Mammary epithelial cell (primary cell): ENCODE measurements at regions of chr15 and their contacts with region 1.

Region 1: DNA sequence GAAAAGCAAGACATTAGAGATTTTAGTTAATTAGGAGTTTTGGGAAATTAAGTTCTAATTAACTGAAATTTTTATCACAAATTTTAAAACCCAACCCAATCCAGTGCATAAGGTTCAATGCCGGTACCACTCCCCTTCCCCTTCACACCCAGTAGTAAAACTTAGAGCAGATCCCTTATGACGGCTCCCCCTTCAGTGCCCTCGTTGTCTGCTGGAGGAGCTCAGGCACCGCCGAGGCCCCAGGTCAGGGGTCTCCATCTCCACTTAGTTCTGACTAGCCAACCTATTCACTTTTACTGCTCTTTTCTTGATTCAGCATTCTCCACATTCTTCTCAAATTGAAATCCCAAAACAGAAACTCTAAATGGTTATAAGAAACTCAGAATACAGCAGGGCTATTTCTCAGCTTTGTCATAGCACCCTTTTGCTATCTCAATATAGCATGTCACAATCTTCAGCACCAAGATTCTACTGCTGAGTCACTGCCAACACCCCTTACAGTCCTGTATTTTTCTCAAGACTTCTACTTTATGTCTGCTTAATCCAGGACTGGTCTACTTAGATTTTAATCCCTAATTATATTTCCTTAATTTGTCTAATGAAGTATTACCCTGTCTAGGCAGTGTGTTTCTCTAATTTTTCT is 39.8 kb downstream of the TUBGCP4 start:
- DNase-seq: peak; percentile 24
- H3K4me3 ChIP-seq: no peak overlapping the region
- H3K27ac ChIP-seq: no peak overlapping the region
- H3K4me1 ChIP-seq: no peaks in the 10 kb centered on the region
- H3K27me3 ChIP-seq: no peaks in the 10 kb centered on the region
- CTCF ChIP-seq: no peak

Region 2: GRCh38 chr15:43329960-43330779 is 80.5 kb before region 1 on chr15 and contains the start of gene LCMT2:
- CTCF ChIA-PET with region 1: no interaction called
- dilution Hi-C with region 1: loop called (anchors 5 kb)
- in situ Hi-C with region 1: no loop called
- intact Hi-C with region 1: no loop called
- DNase-seq: peak; percentile 93
- H3K4me3 ChIP-seq: peak within 1 kb of the TSS; percentile 76 to 85 (median 81)
- H3K27ac ChIP-seq: peak within 1 kb of the TSS; percentile 72
- H3K4me1 ChIP-seq: peaks cover 14% of the 10 kb centered on the region
- H3K27me3 ChIP-seq: no peaks in the 10 kb centered on the region
- CTCF ChIP-seq: no peak
- total RNA-seq, gene LCMT2: 7.9 to 9.5 TPM

Region 3: GRCh38 chr15:43370975-43371974 is 39.4 kb before region 1 on chr15 and contains the starts of genes TUBGCP4 and ZSCAN29:
- CTCF ChIA-PET with region 1: no interaction called
- dilution Hi-C with region 1: loop called (anchors 5 kb)
- in situ Hi-C with region 1: no loop called
- intact Hi-C with region 1: no loop called
- DNase-seq: peak; percentile 64
- H3K4me3 ChIP-seq: peak within 1 kb of the TSS; percentile 74 to 99 (median 89)
- H3K27ac ChIP-seq: peak within 1 kb of the TSS; percentile 28
- H3K4me1 ChIP-seq: peaks cover 10% of the 10 kb centered on the region
- H3K27me3 ChIP-seq: no peaks in the 10 kb centered on the region
- CTCF ChIP-seq: peak; percentile 19 to 63
- total RNA-seq, gene TUBGCP4: 12.3 to 23.4 TPM
- total RNA-seq, gene ZSCAN29: 26.7 to 29.7 TPM

Region 4: DNA sequence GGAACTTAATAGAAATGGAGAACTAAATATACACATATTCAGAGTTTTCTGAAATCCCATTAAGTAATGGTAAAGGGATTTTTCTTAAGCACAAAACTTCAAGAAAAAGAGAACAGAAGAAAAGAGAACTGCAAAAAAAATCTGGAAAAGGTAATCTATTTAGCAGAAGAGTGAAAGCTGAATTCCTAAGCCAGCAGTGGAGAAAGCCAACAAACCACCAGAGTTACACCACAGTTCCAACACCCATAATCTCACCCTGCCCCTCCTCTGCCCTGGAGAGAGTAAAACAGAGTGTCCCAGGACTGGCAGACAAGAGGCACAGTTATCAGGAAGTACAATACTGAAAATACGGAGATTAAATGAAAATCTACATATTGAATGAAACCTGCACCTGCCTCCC is 52.8 kb after region 1 on chr15:
- CTCF ChIA-PET with region 1: no interaction called
- dilution Hi-C with region 1: loop called (anchors 5 kb)
- in situ Hi-C with region 1: no loop called
- intact Hi-C with region 1: no loop called
- DNase-seq: no peak
- H3K4me3 ChIP-seq: no peak overlapping the region
- H3K27ac ChIP-seq: no peak overlapping the region
- H3K4me1 ChIP-seq: peaks cover 16% of the 10 kb centered on the region
- H3K27me3 ChIP-seq: no peaks in the 10 kb centered on the region
- CTCF ChIP-seq: no peak

Region 5: DNA sequence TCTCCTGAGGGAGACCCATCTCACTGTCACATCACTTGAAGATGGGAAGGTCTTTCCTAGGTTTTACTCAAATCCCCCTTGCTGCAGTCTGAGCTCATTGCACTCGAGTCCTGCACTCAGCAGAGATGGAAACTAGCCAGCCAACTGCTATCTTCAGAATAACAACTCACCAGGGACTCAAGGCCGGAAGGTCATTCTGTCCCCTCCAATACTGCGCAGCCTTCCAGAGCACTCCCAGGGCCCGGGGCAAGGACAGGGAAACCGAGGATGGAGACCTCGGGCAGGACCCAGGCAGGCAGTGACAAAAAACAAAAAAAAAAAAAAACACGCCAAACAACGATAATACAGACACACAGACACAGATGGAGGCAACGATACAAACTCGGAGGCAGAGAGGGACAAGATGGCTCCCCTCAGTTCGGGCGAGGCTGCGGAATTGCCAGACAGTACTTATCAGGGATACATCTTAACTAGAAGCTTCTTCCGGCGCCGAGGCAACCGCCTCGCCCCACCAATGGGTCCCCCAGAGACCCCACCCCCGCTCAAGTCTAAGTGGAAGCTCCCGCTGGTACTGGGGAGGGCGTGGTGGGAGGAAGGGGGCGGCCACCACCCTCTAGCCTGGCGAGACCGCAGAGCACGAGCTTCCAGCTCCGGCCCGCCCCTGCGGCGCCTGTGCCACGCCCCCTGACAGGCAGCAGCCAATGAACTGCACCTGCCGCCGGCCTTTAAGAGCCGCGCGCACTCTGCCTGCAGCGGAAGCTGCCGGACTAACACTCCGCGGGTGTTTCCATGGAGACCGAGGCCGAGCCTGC is 99.7 kb after region 1 on chr15:
- CTCF ChIA-PET with region 1: no interaction called
- dilution Hi-C with region 1: loop called (anchors 5 kb)
- in situ Hi-C with region 1: no loop called
- intact Hi-C with region 1: no loop called
- DNase-seq: peak; percentile 96
- H3K4me3 ChIP-seq: peak overlapping the region; percentile 59 to 83 (median 72)
- H3K27ac ChIP-seq: peak overlapping the region; percentile 69
- H3K4me1 ChIP-seq: peaks cover 10% of the 10 kb centered on the region
- H3K27me3 ChIP-seq: no peaks in the 10 kb centered on the region
- CTCF ChIP-seq: peak in 1 of 2 donors; percentile 13